ENCODE measurements at regions of chr6 and their contacts with region 1.

Region 1: DNA sequence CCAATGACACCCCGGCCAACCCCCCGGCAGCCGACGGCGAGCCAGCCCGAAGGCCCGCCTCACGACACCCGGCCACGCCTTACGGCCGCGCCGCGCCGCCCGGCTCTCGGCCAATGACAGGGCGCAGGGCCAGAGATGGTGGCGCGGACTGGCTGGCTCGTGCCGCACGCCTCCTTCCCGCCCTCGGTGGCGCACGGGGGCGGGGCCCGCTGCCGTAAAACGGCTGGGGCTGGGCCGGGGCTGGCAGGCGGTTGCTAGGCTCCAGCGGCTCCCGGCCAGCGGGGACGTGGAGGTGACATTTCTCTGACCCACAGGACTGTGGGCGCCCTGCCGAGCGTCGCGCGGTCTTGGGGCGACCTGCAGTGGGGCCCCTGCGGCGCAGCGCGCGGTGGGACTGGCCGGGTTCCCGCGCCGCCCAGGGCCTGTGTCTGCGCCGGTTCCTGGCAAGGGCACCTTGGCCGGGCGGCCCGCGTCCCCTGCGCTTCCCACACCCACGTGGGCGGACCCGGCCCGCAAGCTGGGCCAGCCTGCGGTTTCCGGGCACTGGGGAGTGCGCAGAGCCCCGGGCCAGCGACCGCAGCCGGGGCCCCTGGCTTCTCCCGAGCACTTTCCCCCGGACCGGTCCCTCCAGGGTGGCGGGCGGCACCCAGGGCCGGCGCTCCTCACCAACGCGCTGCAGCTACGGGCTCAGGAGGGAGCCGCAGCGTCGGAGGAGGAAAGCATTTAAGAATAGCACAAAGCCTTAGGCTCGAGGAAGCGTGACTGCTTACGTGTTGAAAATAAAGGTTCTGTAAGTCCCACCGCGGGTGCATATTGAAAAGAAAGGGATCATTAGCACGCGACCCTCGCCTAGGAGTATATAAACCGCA is at the start of gene MPC1:
- DNase-seq: peak; percentile 98
- ATAC-seq: peak; percentile 98
- total RNA-seq, gene MPC1: 381 TPM

Region 2: GRCh38 chr6:166112580-166112979 is 270.6 kb before region 1 on chr6:
- intact Hi-C with region 1: no loop called
- DNase-seq: no peak
- ATAC-seq: peak; percentile 52

Region 3: GRCh38 chr6:166318649-166319600 is 64.2 kb before region 1 on chr6:
- intact Hi-C with region 1: loop called (anchors 5 kb)
- DNase-seq: no peak
- ATAC-seq: peak; percentile 91

Region 4: GRCh38 chr6:166342349-166343149 is 40.6 kb before region 1 on chr6 and contains the start of gene SFT2D1:
- intact Hi-C with region 1: loop called (anchors 2 kb)
- DNase-seq: peak; percentile 95
- ATAC-seq: peak; percentile 95
- total RNA-seq, gene SFT2D1: 21.9 TPM

Region 5: DNA sequence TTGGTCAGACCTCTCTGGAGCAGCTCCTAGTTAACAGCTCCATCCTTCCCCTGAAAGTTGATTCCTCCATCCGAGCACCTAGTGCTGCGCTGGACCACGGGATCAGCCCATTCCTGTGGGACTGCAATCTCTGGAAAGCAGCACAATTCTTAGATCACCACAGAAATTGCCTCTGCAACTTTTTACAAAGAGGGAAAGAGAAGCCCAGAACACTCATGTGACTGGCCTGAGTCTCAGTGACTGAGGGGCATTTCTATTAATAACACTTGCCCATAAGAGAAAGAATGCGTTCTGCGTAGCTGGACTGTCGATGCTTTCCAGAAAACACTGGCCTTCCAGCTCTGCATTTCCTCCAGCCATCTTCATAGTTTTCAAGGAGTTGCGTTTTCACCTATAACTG is 18.7 kb before region 1 on chr6:
- intact Hi-C with region 1: loop called (anchors 1 kb)
- DNase-seq: no peak
- ATAC-seq: peak; percentile 73

Region 6: DNA sequence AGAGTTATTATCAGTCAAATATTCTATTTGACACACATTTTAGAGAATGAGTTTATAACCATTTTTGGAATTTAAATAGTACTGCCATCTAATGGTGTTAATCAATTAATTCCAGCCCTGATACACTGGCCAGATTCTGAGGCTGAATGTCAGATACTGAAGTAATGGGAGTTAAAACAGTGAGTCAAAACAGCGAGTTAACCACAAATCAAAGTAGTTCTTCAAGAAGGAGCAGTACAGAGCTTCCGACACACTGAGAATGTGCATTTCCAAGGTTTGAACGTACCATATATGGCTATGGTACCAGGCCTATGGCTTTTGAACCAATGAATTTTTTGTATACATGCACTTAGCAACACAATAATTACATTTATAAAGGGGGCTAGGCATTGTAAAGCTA is 604.8 kb after region 1 on chr6:
- intact Hi-C with region 1: no loop called
- DNase-seq: no peak
- ATAC-seq: no peak